ENCODE measurements at regions of chr12 and their contacts with region 1.

Region 1: GRCh38 chr12:53500776-53501614 is at the start of gene TARBP2:
- DNase-seq: peak; percentile 98
- H3K4me3 ChIP-seq: peak within 1 kb of the TSS; percentile 69
- H3K27ac ChIP-seq: peak within 1 kb of the TSS; percentile 97
- H3K4me1 ChIP-seq: peaks cover 13% of the 10 kb centered on the region
- H3K27me3 ChIP-seq: no peaks in the 10 kb centered on the region
- CTCF ChIP-seq: no peak
- total RNA-seq, gene TARBP2: 20.7 to 36.9 TPM

Region 2: GRCh38 chr12:53313996-53314395 is 187.0 kb before region 1 on chr12:
- intact Hi-C with region 1: no loop called
- DNase-seq: no peak
- H3K4me3 ChIP-seq: no peak overlapping the region
- H3K27ac ChIP-seq: no peak overlapping the region
- H3K4me1 ChIP-seq: no peaks in the 10 kb centered on the region
- H3K27me3 ChIP-seq: no peaks in the 10 kb centered on the region
- CTCF ChIP-seq: no peak

Region 3: GRCh38 chr12:53336181-53336681 is 164.8 kb before region 1 on chr12 and contains the start of gene SP7:
- intact Hi-C with region 1: loop called (anchors 10 kb)
- DNase-seq: no peak
- H3K4me3 ChIP-seq: no peak within 1 kb of the TSS
- H3K27ac ChIP-seq: no peak within 1 kb of the TSS
- H3K4me1 ChIP-seq: no peaks in the 10 kb centered on the region
- H3K27me3 ChIP-seq: peaks cover 8% of the 10 kb centered on the region
- CTCF ChIP-seq: no peak
- total RNA-seq, gene SP7: not detected

Region 4: GRCh38 chr12:53451661-53452158 is 49.3 kb before region 1 on chr12 and contains the start of gene PCBP2:
- intact Hi-C with region 1: loop called (anchors 10 kb)
- DNase-seq: peak; percentile 97
- H3K4me3 ChIP-seq: peak within 1 kb of the TSS; percentile 64
- H3K27ac ChIP-seq: peak within 1 kb of the TSS; percentile 91
- H3K4me1 ChIP-seq: no peaks in the 10 kb centered on the region
- H3K27me3 ChIP-seq: no peaks in the 10 kb centered on the region
- CTCF ChIP-seq: peak; percentile 80
- total RNA-seq, gene PCBP2: 579 to 596 TPM

Measured in colonic mucosa (tissue), 4 donors.